AG04450 (cell line): ENCODE measurements at regions of chr2 and their contacts with region 1.

Region 1: DNA sequence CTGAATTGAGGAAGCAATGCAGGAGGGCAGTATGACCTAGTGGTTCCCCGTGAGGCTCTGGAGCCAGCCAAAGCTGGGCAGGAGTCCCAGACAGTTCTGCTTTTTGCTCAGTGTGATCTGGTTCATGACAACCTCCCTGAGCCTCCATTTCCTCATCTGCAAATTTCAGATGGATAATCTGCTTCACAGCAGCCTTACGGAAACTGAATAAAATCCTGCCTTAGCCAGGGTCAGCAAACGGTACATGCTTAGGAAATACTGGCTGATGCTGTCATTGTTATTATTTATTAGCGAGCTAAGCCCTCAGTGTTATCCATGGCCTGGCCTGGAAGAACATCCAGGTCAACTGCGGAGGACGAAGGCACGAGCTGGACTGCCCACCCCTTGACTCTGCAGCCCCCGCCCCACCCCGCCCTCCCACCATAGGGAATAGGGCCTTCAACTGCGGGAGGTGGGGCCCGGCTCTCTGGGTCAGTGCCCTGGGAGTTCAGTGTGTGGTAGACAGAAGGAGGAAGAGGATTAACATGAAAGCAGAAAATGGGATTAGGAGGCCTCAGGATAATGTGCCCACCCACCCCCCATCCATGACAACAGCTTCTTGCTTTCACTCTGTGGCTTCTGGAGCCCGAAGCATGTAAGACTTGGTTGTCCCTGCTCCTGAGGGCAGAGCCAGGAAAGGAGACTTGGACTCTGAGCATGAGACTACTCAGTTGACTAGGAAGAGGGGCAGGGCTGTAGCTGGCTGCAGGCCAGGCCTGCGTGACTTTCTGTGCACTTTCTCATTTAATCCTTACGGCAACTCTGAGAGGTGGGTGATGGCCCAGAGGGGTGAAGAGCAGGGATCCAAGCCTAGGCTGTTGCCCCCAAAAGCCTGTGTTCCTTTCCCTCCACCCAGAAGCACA is 13.1 kb downstream of the PKDCC start:
- DNase-seq: no peak
- H3K4me3 ChIP-seq: no peak overlapping the region
- H3K27ac ChIP-seq: peak overlapping the region; percentile 21
- H3K27me3 ChIP-seq: no peaks in the 10 kb centered on the region
- CTCF ChIP-seq: no peak

Region 2: GRCh38 chr2:42021464-42021863 is 39.5 kb before region 1 on chr2:
- CTCF ChIA-PET with region 1: no interaction called
- POLR2A ChIA-PET with region 1: interaction called, 11 read pairs
- DNase-seq: peak; percentile 43
- H3K4me3 ChIP-seq: no peak overlapping the region
- H3K27ac ChIP-seq: no peak overlapping the region
- H3K27me3 ChIP-seq: no peaks in the 10 kb centered on the region
- CTCF ChIP-seq: no peak

Region 3: GRCh38 chr2:42047488-42048298 is 13.3 kb before region 1 on chr2 and contains the start of gene PKDCC:
- CTCF ChIA-PET with region 1: interaction called, 3 read pairs
- POLR2A ChIA-PET with region 1: interaction called, 27 read pairs
- DNase-seq: peak; percentile 37
- H3K4me3 ChIP-seq: peak within 1 kb of the TSS; percentile 93
- H3K27ac ChIP-seq: peak within 1 kb of the TSS; percentile 61
- H3K27me3 ChIP-seq: peaks cover 6% of the 10 kb centered on the region
- CTCF ChIP-seq: no peak
- polyA plus RNA-seq, gene PKDCC: 87.0 and 107 TPM in 2 replicates